HEK293 (cell line): ENCODE measurements at regions of chr19 and their contacts with region 1.

Region 1: DNA sequence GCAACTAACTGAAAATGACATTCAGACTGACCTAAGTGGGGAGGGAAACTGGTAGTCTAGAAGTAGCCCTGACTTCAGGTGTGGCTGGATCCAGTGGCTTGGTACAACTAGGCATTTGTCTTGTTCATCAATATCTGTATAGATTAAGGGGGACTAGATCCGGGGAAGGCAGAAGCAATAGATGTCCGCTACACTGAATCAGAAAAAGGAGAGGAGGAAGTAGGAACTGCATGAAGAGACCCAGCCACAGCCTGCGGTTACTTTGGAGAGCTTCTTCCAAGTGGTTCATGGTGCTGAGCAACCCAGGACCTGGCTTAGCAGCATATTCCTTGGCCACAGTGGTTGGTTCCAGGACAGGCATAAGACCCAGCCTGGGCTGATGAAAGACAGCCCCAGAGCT is 9.9 kb upstream of the PRODH2 start:
- H3K4me3 ChIP-seq: no peak overlapping the region
- H3K27ac ChIP-seq: no peak overlapping the region
- H3K4me1 ChIP-seq: peaks cover 4% of the 10 kb centered on the region
- CTCF ChIP-seq: no peak

Region 2: DNA sequence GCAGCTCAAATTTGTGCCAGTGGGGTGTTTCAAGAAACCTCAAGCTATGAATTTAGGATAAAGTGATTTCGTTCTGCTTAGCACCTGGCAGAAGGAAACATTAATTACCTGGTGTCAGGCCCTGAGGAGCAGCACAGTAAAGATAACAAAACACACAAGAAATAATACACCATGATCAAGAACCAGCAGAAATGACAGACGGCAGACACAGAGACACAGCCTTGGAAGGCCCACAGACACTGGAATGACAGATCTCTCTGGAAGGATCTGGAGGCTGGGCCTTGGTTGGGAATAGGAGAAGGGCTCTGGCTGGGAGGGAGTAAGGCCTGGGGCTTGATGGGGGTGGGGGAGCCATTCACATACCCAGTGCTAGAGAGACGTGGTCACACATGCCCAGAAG is 20.8 kb before region 1 on chr19:
- CTCF ChIA-PET with region 1: interaction called, 15 read pairs
- POLR2A ChIA-PET with region 1: no interaction called
- H3K4me3 ChIP-seq: no peak overlapping the region
- H3K27ac ChIP-seq: no peak overlapping the region
- H3K4me1 ChIP-seq: no peaks in the 10 kb centered on the region
- CTCF ChIP-seq: no peak

Region 3: DNA sequence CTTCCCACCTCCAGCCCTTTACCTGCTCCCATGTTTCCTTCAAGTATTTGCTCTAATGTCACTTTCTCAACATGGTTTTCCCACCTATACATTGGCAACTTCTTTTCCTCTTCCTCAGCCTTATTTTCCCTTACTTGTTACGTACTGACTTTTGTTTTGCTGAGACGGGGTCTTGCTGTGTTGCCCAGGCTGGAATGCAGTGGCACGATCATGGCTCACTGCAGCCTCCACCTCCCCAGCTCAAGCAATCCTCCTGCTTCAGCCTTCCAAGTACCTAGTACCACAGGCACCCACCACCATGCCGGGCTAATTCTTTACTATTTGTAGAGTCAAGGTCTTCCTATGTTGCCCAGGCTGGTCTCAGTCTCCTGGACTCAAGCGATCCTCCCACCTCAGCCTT is 14.9 kb before region 1 on chr19:
- CTCF ChIA-PET with region 1: interaction called, 10 read pairs
- POLR2A ChIA-PET with region 1: no interaction called
- H3K4me3 ChIP-seq: no peak overlapping the region
- H3K27ac ChIP-seq: no peak overlapping the region
- H3K4me1 ChIP-seq: 0 out of 2 replicates have a peak, but pooled peaks cover 2% of the 10 kb centered on the region
- CTCF ChIP-seq: no peak